ENCODE measurements at regions of chr3 and their contacts with region 1.

Region 1: DNA sequence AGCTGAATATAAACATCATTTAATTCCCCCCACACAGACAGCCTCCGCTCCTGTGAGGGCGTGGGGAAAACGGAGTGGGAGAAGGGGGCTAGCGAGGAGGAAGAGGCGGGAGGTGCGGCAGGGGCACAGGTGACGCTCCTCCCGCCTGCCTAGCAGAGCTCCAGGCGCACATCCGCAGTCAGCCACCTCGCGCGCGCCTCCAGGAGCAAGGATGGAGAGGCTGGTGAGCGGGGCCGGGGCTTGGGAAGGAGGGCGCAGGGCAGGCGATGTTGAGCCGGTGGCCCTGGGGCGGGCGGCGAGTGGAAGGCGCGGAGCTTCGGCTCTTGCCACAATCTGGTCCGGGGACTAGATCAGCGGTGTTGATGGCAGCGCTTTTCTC is at the start of gene CD200:
- DNase-seq: no peak
- H3K4me3 ChIP-seq: peak within 1 kb of the TSS; percentile 63 to 86 (median 84)
- H3K27ac ChIP-seq: peak within 1 kb of the TSS; percentile 91
- H3K4me1 ChIP-seq: peaks cover 2 to 22% (median 10%) of the 10 kb centered on the region in 4 experiments; a peak in 6 of 7 replicates
- H3K27me3 ChIP-seq: no peaks in the 10 kb centered on the region
- CTCF ChIP-seq: peak in 1 of 3 experiments; percentile 1; a peak in 1 of 4 replicates
- EP300 ChIP-seq: no peak
- POLR2A ChIP-seq: peak in 1 of 2 experiments; percentile 75; a peak in 1 of 3 replicates
- RAD21 ChIP-seq: no peak
- total RNA-seq, gene CD200: 50.2 and 51.9 TPM in 2 replicates

Region 2: DNA sequence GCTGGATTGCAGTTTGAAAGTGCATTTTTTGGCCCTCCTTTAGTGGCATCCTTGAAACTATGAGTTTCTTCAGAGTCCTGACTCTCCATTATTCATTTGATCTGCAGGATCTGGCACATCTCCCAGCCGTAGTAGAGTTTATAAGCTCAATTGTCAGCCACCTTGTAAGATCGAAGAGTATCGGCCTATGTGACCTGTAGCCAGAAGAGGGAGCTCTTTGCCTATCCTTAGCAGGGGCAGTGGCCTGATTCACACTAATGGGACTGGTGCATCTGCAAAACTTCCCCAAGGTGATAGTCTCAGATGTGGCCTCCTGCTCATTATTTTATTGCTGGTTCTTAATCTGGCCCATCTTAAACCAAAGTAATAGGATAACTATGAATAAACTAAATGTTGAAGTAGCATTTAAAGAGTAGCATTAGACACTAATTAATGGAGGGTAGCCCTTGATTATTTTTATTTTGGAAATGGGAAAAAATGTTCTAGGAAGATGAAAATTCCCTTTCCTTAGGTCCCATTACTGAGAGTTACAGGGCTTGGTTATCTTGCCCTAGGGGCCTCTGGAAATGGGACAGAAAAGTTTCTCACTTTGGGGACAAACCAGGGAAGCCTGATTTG is 221.1 kb before region 1 on chr3:
- CTCF ChIA-PET with region 1: interaction called, 13 read pairs
- POLR2A ChIA-PET with region 1: interaction called, 3 read pairs
- DNase-seq: peak in 1 of 2 experiments; percentile 31
- H3K4me3 ChIP-seq: no peak overlapping the region
- H3K27ac ChIP-seq: no peak overlapping the region
- H3K4me1 ChIP-seq: peaks cover 0 to 5% (median 0%) of the 10 kb centered on the region in 4 experiments; a peak in 1 of 7 replicates
- H3K27me3 ChIP-seq: no peaks in the 10 kb centered on the region
- CTCF ChIP-seq: peak; percentile 65 to 94 (median 86)
- EP300 ChIP-seq: no peak
- POLR2A ChIP-seq: no peak
- RAD21 ChIP-seq: peak; percentile 96 to 99

Region 3: GRCh38 chr3:112273536-112273935 is 59.5 kb before region 1 on chr3:
- CTCF ChIA-PET with region 1: no interaction called
- POLR2A ChIA-PET with region 1: no interaction called
- DNase-seq: no peak
- H3K4me3 ChIP-seq: no peak overlapping the region
- H3K27ac ChIP-seq: no peak overlapping the region
- H3K4me1 ChIP-seq: no peaks in the 10 kb centered on the region
- H3K27me3 ChIP-seq: peaks cover 0 to 1% (median 0%) of the 10 kb centered on the region in 4 experiments; a peak in 1 of 7 replicates
- CTCF ChIP-seq: no peak
- EP300 ChIP-seq: no peak
- POLR2A ChIP-seq: no peak
- RAD21 ChIP-seq: no peak

Region 4: DNA sequence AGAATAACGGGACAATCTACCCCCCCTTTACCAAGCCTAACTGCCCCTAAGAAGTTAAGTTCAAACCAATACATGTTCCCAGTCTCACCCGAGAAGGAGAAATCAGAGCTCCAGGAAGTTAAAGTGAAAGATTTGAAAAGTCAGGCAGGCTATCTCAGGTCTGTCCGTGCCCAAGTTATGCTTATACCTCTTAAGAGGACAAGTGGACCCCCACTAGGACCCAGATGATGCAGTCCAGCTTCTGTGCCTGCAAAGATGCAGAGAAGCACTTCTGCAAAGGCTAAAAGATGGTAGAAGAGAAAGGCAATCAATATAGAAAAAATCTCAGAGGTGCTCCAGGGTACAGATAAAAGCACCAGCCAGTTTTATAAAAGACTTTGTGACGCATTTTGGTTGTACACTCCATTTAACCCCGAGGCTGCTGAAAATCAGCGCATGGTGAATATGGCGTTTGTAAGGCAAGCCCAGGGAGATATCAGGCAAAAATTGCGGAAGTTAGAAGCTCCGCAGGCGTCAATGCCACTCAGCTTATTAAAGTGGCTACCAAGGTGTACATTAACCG is 29.1 kb before region 1 on chr3:
- CTCF ChIA-PET with region 1: interaction called, 31 read pairs
- POLR2A ChIA-PET with region 1: interaction called, 14 read pairs
- DNase-seq: peak in 1 of 2 experiments; percentile 51
- H3K4me3 ChIP-seq: peak overlapping the region; percentile 29 to 53 (median 37)
- H3K27ac ChIP-seq: peak overlapping the region; percentile 80
- H3K4me1 ChIP-seq: peaks cover 20 to 27% (median 22%) of the 10 kb centered on the region in 4 experiments
- H3K27me3 ChIP-seq: no peaks in the 10 kb centered on the region
- CTCF ChIP-seq: no peak
- EP300 ChIP-seq: no peak
- POLR2A ChIP-seq: no peak
- RAD21 ChIP-seq: no peak

Region 5: DNA sequence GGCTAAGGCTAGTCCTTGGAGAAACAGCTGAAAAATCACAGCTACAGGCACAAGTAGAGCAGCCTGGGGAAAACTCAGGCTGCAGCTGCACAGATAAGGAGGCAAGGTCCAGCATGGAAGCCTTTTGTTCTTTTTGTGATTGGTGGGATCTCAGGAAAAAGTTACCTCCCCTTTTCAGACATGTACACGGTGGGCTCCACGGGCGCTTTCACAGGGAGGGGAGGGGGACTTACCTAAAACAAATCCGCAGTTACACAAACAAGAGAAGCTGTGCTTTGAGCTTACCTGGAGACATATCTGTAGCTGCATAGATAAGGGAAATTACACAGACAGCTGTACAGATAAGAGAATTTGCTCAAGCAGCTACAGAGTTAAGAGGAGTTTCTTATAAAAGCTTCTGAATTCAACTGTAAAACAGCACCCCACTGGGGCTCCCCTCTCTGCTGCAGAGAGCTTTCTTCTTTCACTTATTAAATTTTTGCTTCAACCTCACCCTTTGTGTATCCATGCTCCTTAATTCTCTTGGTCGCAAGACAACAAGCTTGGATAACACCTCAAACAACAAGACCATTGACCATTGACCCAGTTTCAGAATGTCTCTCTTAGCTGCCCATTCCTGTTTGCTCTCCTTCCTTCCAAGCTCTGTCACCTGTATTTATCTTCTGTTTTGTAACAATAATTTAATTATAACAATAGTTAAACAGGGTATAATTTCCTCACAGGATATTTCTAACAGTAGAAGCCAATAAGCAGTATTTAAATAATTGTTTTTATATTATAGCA is 10.9 kb before region 1 on chr3:
- CTCF ChIA-PET with region 1: interaction called, 10 read pairs
- POLR2A ChIA-PET with region 1: interaction called, 16 read pairs
- DNase-seq: no peak
- H3K4me3 ChIP-seq: peak overlapping the region in 1 of 4 experiments; percentile 28; a peak in 1 of 8 replicates
- H3K27ac ChIP-seq: peak overlapping the region; percentile 25; the same call in 1 of the 2 replicates
- H3K4me1 ChIP-seq: peaks cover 0 to 16% (median 8%) of the 10 kb centered on the region in 4 experiments; a peak in 5 of 7 replicates
- H3K27me3 ChIP-seq: no peaks in the 10 kb centered on the region
- CTCF ChIP-seq: no peak
- EP300 ChIP-seq: no peak
- POLR2A ChIP-seq: no peak
- RAD21 ChIP-seq: no peak

Region 6: DNA sequence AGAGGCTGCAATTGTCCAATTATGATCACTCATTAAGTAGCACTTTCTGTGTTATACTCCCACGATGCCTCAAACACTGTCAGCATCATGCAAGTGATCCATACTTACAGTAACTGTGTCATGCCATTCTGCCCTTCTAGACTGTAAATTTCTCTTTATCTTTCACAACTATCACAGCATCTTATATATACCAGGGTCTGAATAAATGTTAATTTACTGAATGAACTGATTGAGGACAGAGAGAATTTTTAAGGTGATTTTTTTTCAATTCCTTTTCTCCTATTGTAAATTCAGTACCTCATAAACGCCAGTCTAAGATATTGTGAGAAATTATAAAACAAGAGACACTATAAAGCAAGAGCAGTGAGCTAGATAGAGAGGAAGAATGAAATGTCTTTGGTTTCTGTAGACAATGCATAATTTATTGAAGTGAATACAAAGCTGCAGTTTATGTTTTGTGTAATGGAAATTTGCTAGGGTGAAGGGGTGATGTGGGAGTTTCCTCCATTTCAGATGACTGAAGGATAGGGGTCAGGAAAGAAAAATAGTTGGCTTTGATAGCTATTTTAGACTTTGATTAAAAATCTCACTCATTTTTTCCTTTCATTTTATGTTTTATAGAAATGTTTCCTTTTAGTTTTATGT is 17.3 kb after region 1 on chr3:
- CTCF ChIA-PET with region 1: interaction called, 10 read pairs
- POLR2A ChIA-PET with region 1: interaction called, 29 read pairs
- DNase-seq: no peak
- H3K4me3 ChIP-seq: no peak overlapping the region
- H3K27ac ChIP-seq: no peak overlapping the region
- H3K4me1 ChIP-seq: peaks cover 2 to 30% (median 22%) of the 10 kb centered on the region in 4 experiments
- H3K27me3 ChIP-seq: no peaks in the 10 kb centered on the region
- CTCF ChIP-seq: no peak
- EP300 ChIP-seq: no peak
- POLR2A ChIP-seq: no peak
- RAD21 ChIP-seq: no peak

Region 7: DNA sequence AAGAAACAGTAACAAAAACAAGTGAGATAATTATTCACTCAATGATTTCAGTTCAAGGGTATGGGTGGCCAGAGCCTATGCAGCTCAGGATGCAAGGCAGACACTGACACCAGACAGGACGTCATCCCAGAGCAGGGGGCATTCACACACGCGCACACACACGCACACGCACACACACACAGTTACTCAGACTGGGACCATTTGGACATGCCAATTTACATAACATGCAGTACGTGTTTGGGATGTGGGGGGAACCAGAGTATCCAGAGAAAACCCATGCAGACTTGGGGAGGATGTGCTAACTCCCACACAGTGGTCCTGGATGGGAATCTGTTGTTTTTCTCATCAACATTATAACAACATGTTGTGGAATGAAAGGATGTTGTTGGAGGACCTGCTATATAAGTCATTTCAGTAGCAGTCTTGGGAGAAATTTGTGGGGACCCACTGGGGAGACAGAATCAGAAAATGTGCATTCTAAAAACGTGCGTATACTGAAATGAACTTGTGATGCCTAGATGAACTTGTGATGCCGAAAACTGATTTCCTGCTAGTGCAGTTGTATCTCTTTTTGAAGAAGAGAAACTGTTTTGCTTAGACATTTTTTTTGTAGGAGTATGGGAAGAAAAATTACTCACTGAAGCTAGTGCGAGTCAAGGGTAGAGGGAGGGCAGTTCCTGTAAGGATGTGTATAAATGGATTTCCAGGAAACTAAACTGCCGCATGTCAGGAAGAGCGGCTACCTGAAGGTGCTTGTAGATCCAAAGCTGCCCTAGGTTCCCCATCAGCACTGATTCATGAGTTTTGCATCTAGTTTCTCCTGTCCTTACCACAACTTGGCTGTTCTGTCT is 25.2 kb after region 1 on chr3:
- CTCF ChIA-PET with region 1: interaction called, 7 read pairs
- POLR2A ChIA-PET with region 1: interaction called, 17 read pairs
- DNase-seq: no peak
- H3K4me3 ChIP-seq: no peak overlapping the region
- H3K27ac ChIP-seq: no peak overlapping the region
- H3K4me1 ChIP-seq: peaks cover 2 to 23% (median 14%) of the 10 kb centered on the region in 4 experiments
- H3K27me3 ChIP-seq: no peaks in the 10 kb centered on the region
- CTCF ChIP-seq: no peak
- EP300 ChIP-seq: no peak
- POLR2A ChIP-seq: no peak
- RAD21 ChIP-seq: no peak

Region 8: DNA sequence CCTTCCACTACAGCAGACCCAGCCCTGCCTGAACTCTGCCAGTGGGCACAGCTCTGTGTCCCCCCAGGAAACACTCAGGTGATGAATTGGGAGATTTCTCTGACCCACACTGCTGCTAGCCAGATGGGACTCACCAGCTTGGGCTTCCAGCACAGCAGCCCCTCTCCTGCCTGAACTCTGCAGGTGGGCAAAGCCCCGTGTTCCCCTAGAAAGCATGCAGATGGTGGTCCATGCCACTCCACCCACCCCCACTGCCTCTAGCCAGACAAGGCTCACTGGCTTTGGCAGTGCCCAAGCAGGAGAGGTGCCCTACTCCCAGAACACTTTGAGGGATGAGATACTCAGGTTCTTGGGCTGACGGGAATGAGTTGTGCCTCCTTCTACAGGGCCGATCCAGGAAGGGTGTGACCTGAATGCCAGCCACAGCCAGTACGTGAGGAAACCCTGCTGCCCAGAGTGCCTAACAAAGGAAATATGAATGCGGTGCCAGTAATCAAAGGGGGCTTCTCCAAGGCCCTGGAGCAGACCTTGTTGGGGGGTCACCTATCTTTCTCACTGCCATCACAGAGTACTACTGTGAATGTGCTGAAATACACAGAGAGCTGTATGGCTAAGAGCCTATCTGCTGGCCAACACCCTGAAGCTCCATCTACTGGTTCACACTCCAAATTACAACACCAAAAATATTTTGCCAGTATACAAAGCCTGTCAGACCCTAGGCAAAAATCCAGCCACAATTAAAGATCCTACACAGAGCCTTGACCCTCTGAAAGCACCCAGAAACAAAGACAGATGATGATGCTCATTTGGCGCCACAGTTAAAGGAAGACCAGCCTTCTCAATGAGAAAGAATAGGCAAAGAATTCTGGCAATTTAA is 104.4 kb after region 1 on chr3:
- CTCF ChIA-PET with region 1: interaction called, 8 read pairs
- POLR2A ChIA-PET with region 1: interaction called, 10 read pairs
- DNase-seq: no peak
- H3K4me3 ChIP-seq: no peak overlapping the region
- H3K27ac ChIP-seq: no peak overlapping the region
- H3K4me1 ChIP-seq: no peaks in the 10 kb centered on the region
- H3K27me3 ChIP-seq: no peaks in the 10 kb centered on the region
- CTCF ChIP-seq: peak in 2 of 3 experiments; percentile 73 to 77; a peak in 3 of 4 replicates
- EP300 ChIP-seq: no peak
- POLR2A ChIP-seq: no peak
- RAD21 ChIP-seq: peak; percentile 83 to 89

Region 9: DNA sequence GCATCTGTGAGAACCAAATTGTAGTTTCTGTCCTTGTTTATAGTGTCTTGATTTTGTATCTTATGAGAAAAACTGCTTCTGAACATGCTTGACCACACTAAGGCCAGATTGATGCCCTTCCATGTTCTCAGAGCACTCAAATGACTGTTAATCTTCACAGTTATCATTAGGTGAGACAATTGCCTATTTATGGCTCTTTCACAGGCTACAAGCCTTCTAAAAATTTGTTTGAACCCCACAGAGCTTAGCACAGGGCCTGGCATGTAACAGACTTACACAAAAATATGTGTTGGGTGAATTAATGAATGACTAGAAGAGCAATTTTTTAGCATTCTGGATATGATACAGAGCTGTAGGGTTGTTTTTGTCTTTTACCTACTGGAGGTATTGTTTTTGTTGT is 123.2 kb after region 1 on chr3:
- CTCF ChIA-PET with region 1: no interaction called
- POLR2A ChIA-PET with region 1: no interaction called
- DNase-seq: no peak
- H3K4me3 ChIP-seq: no peak overlapping the region
- H3K27ac ChIP-seq: no peak overlapping the region
- H3K4me1 ChIP-seq: no peaks in the 10 kb centered on the region
- H3K27me3 ChIP-seq: peaks cover 0 to 1% (median 0%) of the 10 kb centered on the region in 4 experiments; a peak in 1 of 7 replicates
- CTCF ChIP-seq: no peak
- EP300 ChIP-seq: no peak
- POLR2A ChIP-seq: no peak
- RAD21 ChIP-seq: no peak

Region 10: GRCh38 chr3:112602217-112602838 is 269.3 kb after region 1 on chr3:
- CTCF ChIA-PET with region 1: no interaction called
- POLR2A ChIA-PET with region 1: no interaction called
- DNase-seq: no peak
- H3K4me3 ChIP-seq: no peak overlapping the region
- H3K27ac ChIP-seq: no peak overlapping the region
- H3K4me1 ChIP-seq: no peaks in the 10 kb centered on the region
- H3K27me3 ChIP-seq: no peaks in the 10 kb centered on the region
- CTCF ChIP-seq: no peak
- EP300 ChIP-seq: no peak
- POLR2A ChIP-seq: no peak
- RAD21 ChIP-seq: no peak